ENCODE measurements at regions of chr18 and their contacts with region 1.

Region 1: GRCh38 chr18:58135701-58136331 is 91.8 kb downstream of the NEDD4L start:
- DNase-seq: peak; percentile 52
- H3K4me3 ChIP-seq: no peak overlapping the region
- H3K27ac ChIP-seq: no peak overlapping the region
- H3K4me1 ChIP-seq: peaks cover 11% of the 10 kb centered on the region
- H3K27me3 ChIP-seq: no peaks in the 10 kb centered on the region
- CTCF ChIP-seq: peak; percentile 90 to 98

Region 2: DNA sequence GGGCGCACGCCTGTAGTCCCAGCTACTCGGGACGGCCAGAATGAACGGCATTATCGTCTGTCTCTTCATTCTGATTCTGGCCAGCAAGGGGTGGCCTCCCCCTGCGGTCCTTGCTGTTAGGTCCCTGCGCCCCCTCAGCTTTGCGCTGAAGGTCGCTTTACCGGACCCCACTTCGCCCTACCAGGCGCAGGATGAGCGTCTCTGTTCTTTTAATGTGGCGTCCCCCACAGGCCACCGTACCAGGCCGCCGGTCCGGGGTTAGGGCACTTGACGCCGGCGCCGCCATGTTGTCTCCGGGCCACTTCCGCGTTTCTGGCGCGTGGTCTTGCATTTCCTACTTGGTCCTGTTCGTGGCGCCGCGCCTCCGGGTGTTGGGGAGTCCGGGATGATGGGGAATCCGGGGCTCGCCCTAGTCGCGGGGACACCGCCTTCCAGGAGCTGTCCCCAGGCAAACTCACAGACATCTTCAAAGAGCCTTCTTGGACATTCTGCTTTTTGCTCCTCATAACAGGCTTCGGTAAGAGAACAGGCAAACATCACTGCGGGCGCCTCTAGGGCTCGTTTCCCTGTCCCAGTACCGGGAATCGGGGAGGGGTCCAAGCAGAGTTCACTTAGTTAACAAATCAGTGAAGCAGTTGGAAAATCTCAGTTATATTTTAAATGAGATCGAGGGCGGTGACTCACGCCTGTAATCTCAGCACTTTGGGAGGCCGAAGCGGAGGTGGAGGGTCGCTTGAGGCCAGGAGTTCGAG is 505.6 kb before region 1 on chr18:
- CTCF ChIA-PET with region 1: no interaction called
- dilution Hi-C with region 1: no loop called
- in situ Hi-C with region 1: loop called in 1 of 2 experiments (anchors 25 kb)
- intact Hi-C with region 1: no loop called
- DNase-seq: peak; percentile 93
- H3K4me3 ChIP-seq: peak overlapping the region; percentile 64 to 79 (median 68)
- H3K27ac ChIP-seq: peak overlapping the region; percentile 45
- H3K4me1 ChIP-seq: peaks cover 14% of the 10 kb centered on the region
- H3K27me3 ChIP-seq: no peaks in the 10 kb centered on the region
- CTCF ChIP-seq: peak; percentile 53 to 82

Region 3: GRCh38 chr18:57959278-57959677 is 176.5 kb before region 1 on chr18:
- CTCF ChIA-PET with region 1: interaction called, 8 read pairs
- dilution Hi-C with region 1: no loop called
- in situ Hi-C with region 1: no loop called
- intact Hi-C with region 1: loop called (anchors 1 kb)
- DNase-seq: peak; percentile 72
- H3K4me3 ChIP-seq: no peak overlapping the region
- H3K27ac ChIP-seq: no peak overlapping the region
- H3K4me1 ChIP-seq: no peaks in the 10 kb centered on the region
- H3K27me3 ChIP-seq: no peaks in the 10 kb centered on the region
- CTCF ChIP-seq: peak; percentile 39 to 51

Region 4: DNA sequence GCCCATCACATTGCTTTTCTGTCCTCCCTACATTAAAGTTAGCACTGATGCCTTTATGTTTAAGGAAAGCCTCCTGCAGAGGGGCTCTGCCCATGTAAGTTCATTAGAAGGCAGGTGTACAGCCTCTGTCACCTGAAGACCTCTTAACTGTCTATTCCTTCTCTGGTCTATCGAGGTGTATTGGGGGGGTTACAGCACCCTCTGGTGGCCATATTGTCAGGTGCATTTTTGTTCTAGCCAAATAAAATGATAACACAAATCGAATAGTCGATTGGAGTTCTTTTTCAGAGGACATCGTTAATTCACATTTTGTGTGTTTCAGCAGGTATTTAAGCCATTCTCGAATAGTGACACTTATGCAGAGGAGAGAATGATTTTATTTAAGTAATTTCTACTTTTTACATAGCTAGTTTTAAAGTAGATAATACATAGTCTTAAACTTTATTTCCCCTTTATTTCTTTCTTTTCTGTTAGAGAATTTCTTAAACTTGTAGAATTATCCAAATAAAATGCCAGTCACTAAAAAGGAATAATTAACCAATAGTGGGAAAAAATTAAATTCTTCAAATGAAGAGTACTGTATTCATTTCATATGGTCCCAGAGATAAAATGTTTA is 45.0 kb after region 1 on chr18:
- CTCF ChIA-PET with region 1: no interaction called
- dilution Hi-C with region 1: no loop called
- in situ Hi-C with region 1: no loop called
- intact Hi-C with region 1: loop called (anchors 5 kb)
- DNase-seq: peak; percentile 37
- H3K4me3 ChIP-seq: no peak overlapping the region
- H3K27ac ChIP-seq: no peak overlapping the region
- H3K4me1 ChIP-seq: peaks cover 22% of the 10 kb centered on the region
- H3K27me3 ChIP-seq: no peaks in the 10 kb centered on the region
- CTCF ChIP-seq: peak; percentile 88 to 89

Region 5: GRCh38 chr18:58231930-58232329 is 96.1 kb after region 1 on chr18:
- CTCF ChIA-PET with region 1: no interaction called
- dilution Hi-C with region 1: no loop called
- in situ Hi-C with region 1: no loop called
- intact Hi-C with region 1: loop called (anchors 2 kb)
- DNase-seq: no peak
- H3K4me3 ChIP-seq: no peak overlapping the region
- H3K27ac ChIP-seq: peak overlapping the region; percentile 86
- H3K4me1 ChIP-seq: peaks cover 52% of the 10 kb centered on the region
- H3K27me3 ChIP-seq: no peaks in the 10 kb centered on the region
- CTCF ChIP-seq: peak; percentile 47 to 68

Region 6: DNA sequence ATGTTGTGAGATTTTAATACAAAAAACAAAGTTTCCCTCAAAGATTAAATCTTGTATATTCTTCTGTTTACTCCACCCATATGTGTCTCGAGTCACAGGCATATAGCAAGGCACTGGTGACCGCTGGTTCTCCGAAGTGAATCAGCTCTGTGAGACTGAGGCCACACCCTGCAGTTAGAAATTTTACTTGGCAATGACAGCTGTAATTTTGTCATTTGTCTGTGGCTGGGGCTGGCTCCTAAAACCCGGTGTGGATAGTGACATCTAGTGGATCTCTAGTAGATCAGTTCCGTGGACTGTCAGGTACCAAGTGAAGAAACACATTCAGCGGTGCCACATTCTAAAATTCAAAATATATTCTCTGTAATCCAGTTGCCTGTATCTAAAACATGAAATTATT is 186.2 kb after region 1 on chr18:
- CTCF ChIA-PET with region 1: interaction called, 4 read pairs
- dilution Hi-C with region 1: no loop called
- in situ Hi-C with region 1: no loop called
- intact Hi-C with region 1: loop called (anchors 1 kb)
- DNase-seq: peak; percentile 86
- H3K4me3 ChIP-seq: no peak overlapping the region
- H3K27ac ChIP-seq: peak overlapping the region; percentile 83
- H3K4me1 ChIP-seq: peaks cover 14% of the 10 kb centered on the region
- H3K27me3 ChIP-seq: no peaks in the 10 kb centered on the region
- CTCF ChIP-seq: peak; percentile 65 to 68